ENCODE measurements at regions of chr10 and their contacts with region 1.

Region 1: GRCh38 chr10:33022090-33022489 is 64.1 kb upstream of the ITGB1 start:
- DNase-seq: no peak
- ATAC-seq: no peak
- H3K4me3 ChIP-seq: no peak overlapping the region
- H3K4me3 Mint-ChIP-seq: no peak overlapping the region
- H3K27ac ChIP-seq: no peak overlapping the region
- H3K27ac Mint-ChIP-seq: no peak overlapping the region
- H3K4me1 ChIP-seq: peaks cover 2 to 17% of the 10 kb centered on the region in 2 experiments
- H3K4me1 Mint-ChIP-seq: peaks cover 25 to 30% (median 26%) of the 10 kb centered on the region in 3 donors
- H3K27me3 ChIP-seq: no peaks in the 10 kb centered on the region
- H3K27me3 Mint-ChIP-seq: no peaks in the 10 kb centered on the region

Region 2: DNA sequence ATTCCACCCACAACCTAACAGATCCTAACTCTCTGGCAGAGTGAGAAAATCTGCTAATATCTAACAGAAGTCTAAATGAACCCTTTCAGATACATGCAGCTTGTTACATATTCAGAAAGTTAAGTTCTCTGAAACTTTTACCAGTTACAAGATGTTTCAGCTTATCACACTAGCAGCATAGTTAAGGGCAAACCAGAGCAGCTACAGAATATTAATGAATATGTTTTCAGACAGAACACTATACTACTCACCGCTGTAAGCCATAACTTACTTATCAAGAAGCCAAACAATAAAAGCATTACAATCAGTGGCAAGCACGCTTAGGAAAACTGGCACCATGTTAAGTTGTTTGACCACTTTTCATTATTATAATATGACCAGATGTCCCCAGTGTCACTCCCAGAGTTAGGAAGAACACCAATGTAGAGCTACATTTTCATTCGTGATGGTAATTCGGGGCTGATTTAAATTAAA is 66.8 kb before region 1 on chr10:
- CTCF ChIA-PET with region 1: no interaction called
- POLR2A ChIA-PET with region 1: interaction called in 1 of 2 experiments, 16 read pairs
- DNase-seq: no peak
- ATAC-seq: no peak
- H3K4me3 ChIP-seq: peak overlapping the region in 1 of 2 donors; percentile 63
- H3K4me3 Mint-ChIP-seq: peak overlapping the region; percentile 57 to 85 (median 82)
- H3K27ac ChIP-seq: peak overlapping the region; percentile 62
- H3K27ac Mint-ChIP-seq: peak overlapping the region; percentile 66 to 88
- H3K4me1 ChIP-seq: peaks cover 23 to 32% of the 10 kb centered on the region in 2 experiments
- H3K4me1 Mint-ChIP-seq: peaks cover 58 to 77% (median 76%) of the 10 kb centered on the region in 3 donors
- H3K27me3 ChIP-seq: no peaks in the 10 kb centered on the region
- H3K27me3 Mint-ChIP-seq: no peaks in the 10 kb centered on the region

Region 3: GRCh38 chr10:33066558-33067236 is 44.6 kb after region 1 on chr10:
- CTCF ChIA-PET with region 1: no interaction called
- POLR2A ChIA-PET with region 1: no interaction called
- DNase-seq: no peak
- ATAC-seq: no peak
- H3K4me3 ChIP-seq: no peak overlapping the region
- H3K4me3 Mint-ChIP-seq: no peak overlapping the region
- H3K27ac ChIP-seq: no peak overlapping the region
- H3K27ac Mint-ChIP-seq: no peak overlapping the region
- H3K4me1 ChIP-seq: no peaks in the 10 kb centered on the region
- H3K4me1 Mint-ChIP-seq: peaks cover 0 to 20% (median 12%) of the 10 kb centered on the region in 3 donors
- H3K27me3 ChIP-seq: no peaks in the 10 kb centered on the region
- H3K27me3 Mint-ChIP-seq: no peaks in the 10 kb centered on the region

Measured in T-cell (primary cell).